ENCODE measurements at regions of chr1 and their contacts with region 1.

Region 1: DNA sequence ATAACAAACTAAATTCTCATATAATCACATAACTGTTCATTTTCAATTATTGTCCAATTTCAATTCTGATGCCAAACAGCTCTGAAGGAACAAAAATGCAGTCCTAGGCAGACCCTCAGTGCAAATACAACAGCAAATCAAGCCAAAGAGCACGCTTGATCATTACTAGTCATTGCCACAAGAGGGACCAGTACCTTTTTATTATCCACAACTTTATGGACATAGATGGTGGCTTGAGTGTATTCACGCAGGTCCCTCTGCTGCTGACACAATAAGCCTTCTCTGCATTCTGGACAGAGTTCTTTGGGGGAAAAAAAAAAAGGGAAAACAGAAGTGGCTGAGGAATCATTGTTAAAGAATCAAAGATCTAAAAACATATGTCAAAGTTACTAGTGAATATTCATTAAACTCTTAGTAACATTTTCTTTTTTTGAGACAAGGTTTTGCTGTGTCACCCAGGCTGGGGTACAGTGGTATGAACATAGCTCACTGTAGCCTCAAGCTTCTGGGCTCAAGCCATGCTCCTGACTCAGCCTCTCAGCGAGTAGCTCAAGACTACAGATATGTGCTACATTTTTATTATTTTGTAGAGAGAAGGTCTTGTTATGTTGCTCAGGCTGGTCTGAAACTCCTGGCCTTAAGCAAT is 34.3 kb upstream of the RAP1GAP start:
- DNase-seq: peak; percentile 88
- ATAC-seq: peak; percentile 89
- H3K4me3 ChIP-seq: no peak overlapping the region
- H3K27ac ChIP-seq: no peak overlapping the region
- H3K4me1 ChIP-seq: peaks cover 10% of the 10 kb centered on the region
- H3K27me3 ChIP-seq: no peaks in the 10 kb centered on the region
- CTCF ChIP-seq: peak; percentile 40
- POLR2A ChIP-seq: no peak
- RAD21 ChIP-seq: peak; percentile 27

Region 2: GRCh38 chr1:21261551-21262281 is 441.7 kb before region 1 on chr1:
- CTCF ChIA-PET with region 1: no interaction called
- POLR2A ChIA-PET with region 1: no interaction called
- dilution Hi-C with region 1: no loop called
- in situ Hi-C with region 1: no loop called
- intact Hi-C with region 1: no loop called
- DNase-seq: peak; percentile 96
- ATAC-seq: peak; percentile 76
- H3K4me3 ChIP-seq: no peak overlapping the region
- H3K27ac ChIP-seq: peak overlapping the region; percentile 94
- H3K4me1 ChIP-seq: peaks cover 47% of the 10 kb centered on the region
- H3K27me3 ChIP-seq: no peaks in the 10 kb centered on the region
- CTCF ChIP-seq: no peak
- POLR2A ChIP-seq: peak; percentile 79
- RAD21 ChIP-seq: no peak

Region 3: GRCh38 chr1:21742578-21742977 is 39.1 kb after region 1 on chr1:
- CTCF ChIA-PET with region 1: no interaction called
- POLR2A ChIA-PET with region 1: no interaction called
- dilution Hi-C with region 1: no loop called
- in situ Hi-C with region 1: no loop called
- intact Hi-C with region 1: loop called (anchors 5 kb)
- DNase-seq: peak; percentile 46
- ATAC-seq: peak; percentile 64
- H3K4me3 ChIP-seq: no peak overlapping the region
- H3K27ac ChIP-seq: no peak overlapping the region
- H3K4me1 ChIP-seq: peaks cover 3% of the 10 kb centered on the region; the same call in 1 of the 2 replicates
- H3K27me3 ChIP-seq: no peaks in the 10 kb centered on the region
- CTCF ChIP-seq: no peak
- POLR2A ChIP-seq: no peak
- RAD21 ChIP-seq: no peak